ENCODE measurements at regions of chr6 and their contacts with region 1.

Region 1: DNA sequence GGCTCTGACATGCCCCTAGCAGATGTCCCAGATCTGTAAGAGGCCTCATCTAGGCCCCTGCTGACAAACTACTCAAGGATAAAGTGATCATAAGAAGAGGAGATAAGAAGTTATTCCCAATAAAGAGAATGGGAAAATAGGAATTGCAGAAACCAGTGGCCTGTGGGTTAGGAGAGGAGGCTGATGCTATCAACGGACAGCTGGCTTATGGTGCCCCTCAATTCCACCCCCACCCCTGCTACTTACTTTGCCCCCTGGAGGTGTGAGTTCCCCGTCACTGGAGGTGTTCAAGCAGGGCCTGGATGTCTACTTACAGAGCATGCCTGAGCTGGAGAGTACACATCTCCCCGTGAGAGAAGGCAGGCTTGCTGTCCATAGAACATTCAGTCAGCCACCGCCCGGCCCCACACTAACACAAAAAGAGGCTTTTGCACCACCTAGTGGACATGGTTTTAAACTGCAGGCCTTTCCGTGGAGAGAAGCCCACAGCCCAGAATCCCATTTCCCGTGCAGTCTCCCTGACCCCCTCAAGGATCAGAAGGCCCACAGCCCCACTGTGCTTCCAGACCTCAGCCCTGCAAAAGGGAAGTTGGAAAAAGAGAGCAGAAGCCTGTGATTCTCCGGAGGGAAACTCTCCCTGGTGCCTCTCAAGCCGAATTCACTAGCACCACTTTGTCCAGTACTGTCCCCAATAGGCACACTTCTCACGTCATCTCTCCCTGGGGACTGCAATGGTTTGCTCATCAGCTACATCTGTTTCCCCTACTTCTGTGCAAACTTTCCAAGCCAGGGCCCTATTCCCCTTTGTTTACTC is 23.8 kb upstream of the BNIP5 start:
- DNase-seq: no peak
- ATAC-seq: peak; percentile 65
- H3K4me3 ChIP-seq: no peak overlapping the region
- H3K27ac ChIP-seq: no peak overlapping the region
- H3K4me1 ChIP-seq: peaks cover 36% of the 10 kb centered on the region
- H3K27me3 ChIP-seq: no peaks in the 10 kb centered on the region
- CTCF ChIP-seq: peak; percentile 78 to 93 (median 81)
- EP300 ChIP-seq: peak in 1 of 2 experiments; percentile 16; a peak in 1 of 4 replicates
- POLR2A ChIP-seq: no peak
- RAD21 ChIP-seq: peak; percentile 94

Region 2: GRCh38 chr6:36131511-36132245 is 228.8 kb before region 1 on chr6:
- CTCF ChIA-PET with region 1: interaction called, 82 read pairs
- POLR2A ChIA-PET with region 1: interaction called, 3 read pairs
- RAD21 ChIA-PET with region 1: interaction called, 16 read pairs
- SMC1A ChIA-PET with region 1: interaction called, 75 read pairs
- in situ Hi-C with region 1: no loop called
- intact Hi-C with region 1: no loop called
- DNase-seq: peak; percentile 92
- ATAC-seq: peak; percentile 80
- H3K4me3 ChIP-seq: peak overlapping the region; percentile 46; the same call in 1 of the 2 replicates
- H3K27ac ChIP-seq: no peak overlapping the region; the same call in 1 of the 2 replicates
- H3K4me1 ChIP-seq: peaks cover 30% of the 10 kb centered on the region
- H3K27me3 ChIP-seq: no peaks in the 10 kb centered on the region
- CTCF ChIP-seq: no peak; a peak in 1 of 6 replicates
- EP300 ChIP-seq: 0 out of 4 replicates have a peak, but pooled peaks of 1 of the 2 experiments have one; percentile 9
- POLR2A ChIP-seq: no peak
- RAD21 ChIP-seq: no peak

Region 3: DNA sequence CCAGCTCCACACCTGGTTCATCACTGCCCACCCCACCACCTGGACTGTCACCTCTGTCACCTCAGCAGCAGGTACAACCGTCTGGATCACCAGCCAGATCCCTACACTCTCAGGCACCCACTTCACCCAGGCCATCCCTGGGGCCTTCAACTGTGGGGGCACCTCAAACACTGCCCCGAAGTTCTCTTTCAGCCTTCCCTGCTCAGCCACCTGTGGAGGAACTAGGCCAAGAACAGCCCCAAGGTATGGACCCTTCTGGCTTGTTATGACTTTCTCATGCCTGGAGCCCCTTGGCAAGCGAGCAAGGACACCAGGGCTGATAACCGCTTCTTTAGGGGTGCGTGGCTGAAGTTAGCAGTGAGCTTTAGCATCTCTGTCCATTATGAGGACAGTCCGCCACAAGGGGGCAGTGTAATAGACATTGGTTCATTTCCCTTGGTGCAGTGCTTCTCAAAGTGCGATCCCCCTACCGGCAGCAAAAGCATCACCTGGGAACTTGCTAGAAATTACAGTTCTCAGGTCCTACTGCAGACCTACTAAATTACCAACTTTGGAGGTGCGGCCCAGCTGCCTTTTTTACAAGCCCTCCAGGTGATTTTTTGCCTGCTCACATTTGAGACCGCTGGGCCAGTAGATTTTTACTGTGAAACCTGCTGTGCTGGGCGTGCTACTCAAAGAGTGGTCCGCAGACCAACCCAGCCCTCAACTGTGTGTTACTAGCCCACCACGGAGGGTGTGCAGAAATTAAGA is 58.0 kb before region 1 on chr6:
- CTCF ChIA-PET with region 1: interaction called, 313 read pairs
- POLR2A ChIA-PET with region 1: interaction called, 18 read pairs
- RAD21 ChIA-PET with region 1: interaction called, 122 read pairs
- SMC1A ChIA-PET with region 1: interaction called, 188 read pairs
- in situ Hi-C with region 1: no loop called
- intact Hi-C with region 1: loop called (anchors 1 kb)
- DNase-seq: peak; percentile 77
- ATAC-seq: peak; percentile 99
- H3K4me3 ChIP-seq: no peak overlapping the region
- H3K27ac ChIP-seq: no peak overlapping the region
- H3K4me1 ChIP-seq: no peaks in the 10 kb centered on the region
- H3K27me3 ChIP-seq: no peaks in the 10 kb centered on the region
- CTCF ChIP-seq: peak; percentile 88 to 98 (median 98)
- EP300 ChIP-seq: no peak
- POLR2A ChIP-seq: no peak
- RAD21 ChIP-seq: peak; percentile 75

Region 4: DNA sequence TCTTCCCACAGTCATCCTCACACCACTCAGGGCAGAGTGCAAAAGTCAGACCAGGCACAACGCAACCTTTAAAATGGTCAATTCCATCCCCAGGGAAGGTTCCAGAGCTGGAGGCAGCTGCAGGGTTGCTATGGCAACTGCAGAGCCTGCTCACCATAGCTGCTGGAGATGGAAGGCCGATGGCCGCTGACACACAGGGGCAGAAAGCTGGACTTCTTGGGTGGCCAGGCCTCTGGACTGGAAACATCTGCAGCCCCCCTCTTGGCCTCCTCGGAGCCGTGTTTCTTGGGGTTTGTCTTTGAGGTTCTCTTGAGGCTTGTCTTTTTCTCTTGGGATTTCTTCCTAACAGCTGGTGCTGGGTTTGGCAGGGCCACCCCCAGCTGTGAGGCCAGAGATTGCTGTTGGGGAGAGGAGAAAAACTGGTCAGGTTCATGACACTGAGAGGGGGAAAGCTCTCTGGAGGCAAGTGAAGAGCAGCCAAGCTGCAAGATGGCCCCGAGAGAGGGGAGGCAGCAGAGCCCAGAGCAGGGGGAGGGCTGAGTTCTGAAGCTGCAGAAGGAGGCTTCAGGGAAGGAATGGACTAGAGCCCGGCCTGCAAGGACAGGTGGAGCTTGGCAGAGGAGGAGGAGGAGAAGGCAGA is 34.0 kb before region 1 on chr6:
- CTCF ChIA-PET with region 1: interaction called, 4 read pairs
- POLR2A ChIA-PET with region 1: interaction called, 3 read pairs
- RAD21 ChIA-PET with region 1: interaction called, 12 read pairs
- SMC1A ChIA-PET with region 1: interaction called, 13 read pairs
- in situ Hi-C with region 1: no loop called
- intact Hi-C with region 1: no loop called
- DNase-seq: no peak
- ATAC-seq: no peak
- H3K4me3 ChIP-seq: no peak overlapping the region
- H3K27ac ChIP-seq: no peak overlapping the region
- H3K4me1 ChIP-seq: no peaks in the 10 kb centered on the region
- H3K27me3 ChIP-seq: 0 out of 4 replicates have a peak, but pooled peaks cover 0 to 3% of the 10 kb centered on the region in 2 experiments
- CTCF ChIP-seq: no peak
- EP300 ChIP-seq: no peak
- POLR2A ChIP-seq: no peak
- RAD21 ChIP-seq: no peak

Region 5: DNA sequence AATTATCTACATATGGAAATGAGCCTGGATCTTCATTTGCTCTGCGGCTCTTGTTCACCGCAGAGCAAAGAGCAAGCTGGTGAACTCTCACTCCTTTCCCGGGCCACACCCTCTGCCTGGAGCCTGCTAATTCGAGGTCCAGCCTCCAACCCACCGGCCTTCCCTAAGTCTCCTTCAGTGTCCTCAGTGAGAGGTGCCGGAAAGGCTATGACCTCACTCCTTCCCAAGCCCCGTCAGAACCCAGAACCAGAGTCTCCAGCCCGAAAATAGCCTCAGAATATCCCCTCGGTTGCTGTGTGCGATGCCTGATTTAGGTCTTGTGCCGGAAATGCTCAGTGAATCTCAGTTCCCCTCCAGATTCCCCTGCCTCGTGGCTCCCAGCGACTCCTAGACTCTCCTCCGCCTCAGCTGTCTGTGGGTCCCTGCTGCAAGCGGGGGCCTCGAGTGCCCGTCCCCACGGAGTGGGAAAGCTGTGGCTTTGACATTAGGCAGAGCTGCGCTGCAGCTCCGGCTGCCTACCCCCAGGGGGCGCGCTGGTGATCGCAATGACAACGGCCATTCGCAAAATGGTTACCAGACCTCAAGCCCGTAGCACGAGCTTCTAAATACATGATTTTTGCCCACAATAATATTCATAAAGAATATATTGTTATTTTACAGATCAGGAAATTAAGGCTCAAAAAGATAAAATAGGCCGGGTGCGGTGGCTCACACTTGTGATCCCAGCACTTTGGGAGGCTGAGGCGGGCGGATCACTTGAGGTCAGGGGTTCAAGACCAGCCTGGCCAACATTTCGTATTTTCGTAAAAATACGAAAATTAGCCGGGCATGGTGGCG is 19.6 kb before region 1 on chr6:
- CTCF ChIA-PET with region 1: interaction called, 483 read pairs
- POLR2A ChIA-PET with region 1: interaction called, 44 read pairs
- RAD21 ChIA-PET with region 1: interaction called, 311 read pairs
- SMC1A ChIA-PET with region 1: interaction called, 386 read pairs
- in situ Hi-C with region 1: no loop called
- intact Hi-C with region 1: loop called (anchors 1 kb)
- DNase-seq: peak; percentile 34
- ATAC-seq: peak; percentile 80
- H3K4me3 ChIP-seq: no peak overlapping the region
- H3K27ac ChIP-seq: no peak overlapping the region
- H3K4me1 ChIP-seq: peaks cover 40% of the 10 kb centered on the region
- H3K27me3 ChIP-seq: no peaks in the 10 kb centered on the region
- CTCF ChIP-seq: peak; percentile 91 to 100 (median 98)
- EP300 ChIP-seq: no peak
- POLR2A ChIP-seq: no peak
- RAD21 ChIP-seq: peak; percentile 67

Region 6: GRCh38 chr6:36858407-36858981 is 498.0 kb after region 1 on chr6:
- CTCF ChIA-PET with region 1: no interaction called
- POLR2A ChIA-PET with region 1: no interaction called
- RAD21 ChIA-PET with region 1: no interaction called
- SMC1A ChIA-PET with region 1: no interaction called
- in situ Hi-C with region 1: no loop called
- intact Hi-C with region 1: no loop called
- DNase-seq: no peak
- ATAC-seq: no peak
- H3K4me3 ChIP-seq: no peak overlapping the region
- H3K27ac ChIP-seq: no peak overlapping the region
- H3K4me1 ChIP-seq: no peaks in the 10 kb centered on the region
- H3K27me3 ChIP-seq: no peaks in the 10 kb centered on the region
- CTCF ChIP-seq: no peak
- EP300 ChIP-seq: no peak
- POLR2A ChIP-seq: no peak
- RAD21 ChIP-seq: no peak